ENCODE measurements at regions of chr13 and their contacts with region 1.

Region 1: DNA sequence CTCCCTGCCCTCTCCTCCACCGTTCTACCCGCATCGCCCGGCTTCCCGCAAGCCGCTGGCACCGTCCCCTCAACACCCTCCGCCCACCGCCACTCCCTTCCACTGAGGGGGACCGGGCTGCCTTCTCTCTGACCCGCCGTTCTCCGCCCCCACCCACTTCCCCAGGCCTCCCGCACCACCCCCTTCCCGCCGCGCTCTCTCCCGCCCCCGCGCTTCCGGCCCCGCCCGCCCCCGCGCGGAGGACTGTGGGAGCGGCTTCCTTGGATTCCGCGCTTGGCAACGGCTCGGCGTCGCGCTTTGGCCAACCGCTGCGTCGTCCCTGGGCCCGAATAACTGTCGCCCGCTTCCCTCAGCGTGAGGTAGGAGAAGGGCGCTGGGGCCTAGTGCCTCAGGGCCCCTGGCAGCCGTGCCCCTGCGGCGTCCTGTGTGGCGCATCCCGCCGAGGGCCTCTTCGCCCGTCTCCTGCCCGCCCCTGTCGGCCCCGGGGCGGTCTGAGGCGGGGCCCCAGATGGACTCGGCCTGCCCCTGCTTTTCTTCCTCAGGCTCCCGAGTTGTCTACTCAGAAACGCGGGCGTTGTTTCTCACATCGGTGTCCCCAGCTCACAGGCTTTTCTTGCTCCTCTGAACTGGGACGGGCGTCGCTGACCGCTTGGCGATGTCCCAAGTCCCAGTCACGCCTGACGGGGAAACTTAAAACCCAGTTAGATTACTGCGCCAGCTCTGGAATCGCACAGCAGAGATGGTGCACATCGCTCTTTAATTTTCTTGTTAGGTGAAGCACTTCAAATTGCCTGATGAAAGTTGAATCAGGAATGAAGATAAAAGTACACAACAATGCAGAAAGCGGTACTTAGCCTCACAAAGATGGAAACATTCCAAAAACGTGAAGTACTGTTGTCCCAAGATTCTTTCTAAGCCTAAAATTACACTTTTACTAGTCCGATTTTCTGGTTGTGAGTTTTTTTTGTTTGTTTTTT is at the start of gene IFT88:
- DNase-seq: peak; percentile 86
- H3K4me3 Mint-ChIP-seq: peak within 1 kb of the TSS; percentile 95
- H3K27ac Mint-ChIP-seq: peak within 1 kb of the TSS; percentile 96
- H3K4me1 Mint-ChIP-seq: no peaks in the 10 kb centered on the region
- H3K27me3 Mint-ChIP-seq: no peaks in the 10 kb centered on the region
- CTCF ChIP-seq: no peak
- total RNA-seq, gene IFT88: 18.3 and 19.8 TPM in 2 replicates

Region 2: DNA sequence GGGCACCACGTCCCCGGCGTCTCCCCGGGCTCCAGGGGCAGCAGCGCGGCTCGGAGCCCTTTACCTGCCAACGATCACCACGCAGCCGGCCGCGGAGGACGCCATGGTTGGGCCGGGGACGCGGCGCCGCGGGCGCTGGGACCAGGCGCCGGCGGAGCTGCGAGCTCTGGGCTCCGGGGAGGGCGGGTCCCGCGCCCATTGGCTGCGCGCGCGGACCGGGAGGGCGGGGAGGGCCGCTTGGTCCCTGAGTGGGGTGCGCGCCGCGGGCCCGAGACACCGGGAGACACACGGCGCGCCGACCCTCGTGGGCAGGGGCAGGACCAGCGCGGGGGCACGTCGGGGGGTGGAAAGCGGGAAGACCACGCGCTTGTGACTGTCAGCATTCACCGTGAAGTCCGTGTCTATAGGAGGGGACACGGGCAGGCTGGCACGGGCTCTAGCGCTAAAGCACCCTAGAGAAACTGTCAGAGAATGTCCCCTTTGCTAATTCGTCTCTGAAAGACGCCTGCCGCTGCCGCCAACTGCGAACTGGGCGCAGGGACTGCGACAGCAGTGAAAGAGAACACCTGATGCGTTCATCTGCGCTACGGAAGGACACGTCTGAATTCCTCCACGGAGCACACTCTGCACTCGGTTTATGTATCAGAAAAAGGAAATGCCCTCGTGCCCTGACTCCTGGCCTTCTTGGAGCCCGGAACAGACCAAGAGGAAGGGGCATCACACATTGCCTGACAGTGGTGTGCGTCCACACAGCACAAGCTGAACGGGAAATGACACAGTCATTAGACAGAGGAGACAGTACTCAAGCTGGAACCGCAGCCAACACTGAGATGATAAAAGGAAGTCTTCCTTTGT is 41.3 kb before region 1 on chr13 and contains the start of gene CRYL1:
- CTCF ChIA-PET with region 1: no interaction called
- POLR2A ChIA-PET with region 1: interaction called, 35 read pairs
- intact Hi-C with region 1: loop called (anchors 2 kb)
- DNase-seq: peak; percentile 50
- H3K4me3 Mint-ChIP-seq: peak within 1 kb of the TSS; percentile 83
- H3K27ac Mint-ChIP-seq: peak within 1 kb of the TSS; percentile 70
- H3K4me1 Mint-ChIP-seq: peaks cover 6% of the 10 kb centered on the region
- H3K27me3 Mint-ChIP-seq: no peaks in the 10 kb centered on the region
- CTCF ChIP-seq: no peak
- total RNA-seq, gene CRYL1: 15.1 and 21.2 TPM in 2 replicates

Region 3: GRCh38 chr13:20703780-20704445 is 136.7 kb after region 1 on chr13:
- CTCF ChIA-PET with region 1: interaction called, 3 read pairs
- POLR2A ChIA-PET with region 1: no interaction called
- intact Hi-C with region 1: loop called (anchors 5 kb)
- DNase-seq: peak; percentile 64
- H3K4me3 Mint-ChIP-seq: peak overlapping the region; percentile 77
- H3K27ac Mint-ChIP-seq: no peak overlapping the region
- H3K4me1 Mint-ChIP-seq: peaks cover under 1% of the 10 kb centered on the region
- H3K27me3 Mint-ChIP-seq: no peaks in the 10 kb centered on the region
- CTCF ChIP-seq: peak; percentile 52